Aorta (tissue), 5 donors: ENCODE measurements at regions of chr18 and their contacts with region 1.

Region 1: DNA sequence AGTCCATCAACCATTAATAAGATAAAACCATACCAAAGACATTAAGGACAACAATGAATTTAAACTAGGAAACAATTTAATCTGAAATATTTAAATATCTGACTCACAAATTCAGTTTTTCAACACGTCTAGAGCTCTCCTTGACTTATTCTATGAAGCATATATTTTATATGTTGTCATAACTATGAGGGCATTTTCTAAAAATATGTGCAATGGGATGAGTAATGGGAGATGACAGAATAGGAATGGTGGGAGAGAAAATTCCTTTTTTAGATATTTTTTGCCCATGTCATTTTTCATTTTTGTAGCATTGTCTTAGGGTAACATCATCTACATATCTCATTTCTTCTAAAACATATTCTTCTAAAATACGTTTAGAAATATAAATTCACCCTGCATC is 79.2 kb upstream of the CDH2 start:
- DNase-seq: no peak
- ATAC-seq: no peak
- H3K4me3 ChIP-seq: no peak overlapping the region
- H3K27ac ChIP-seq: no peak overlapping the region
- H3K4me1 ChIP-seq: no peaks in the 10 kb centered on the region
- H3K27me3 ChIP-seq: no peaks in the 10 kb centered on the region

Region 2: GRCh38 chr18:27695503-27695902 is 560.7 kb before region 1 on chr18:
- intact Hi-C with region 1: loop called in 1 of 2 experiments (anchors 5 kb)
- DNase-seq: no peak
- ATAC-seq: no peak
- H3K4me3 ChIP-seq: no peak overlapping the region
- H3K27ac ChIP-seq: no peak overlapping the region
- H3K4me1 ChIP-seq: no peaks in the 10 kb centered on the region
- H3K27me3 ChIP-seq: no peaks in the 10 kb centered on the region

Region 3: GRCh38 chr18:27954226-27954625 is 301.9 kb before region 1 on chr18:
- intact Hi-C with region 1: no loop called
- DNase-seq: no peak
- ATAC-seq: no peak
- H3K4me3 ChIP-seq: no peak overlapping the region
- H3K27ac ChIP-seq: no peak overlapping the region
- H3K4me1 ChIP-seq: no peaks in the 10 kb centered on the region
- H3K27me3 ChIP-seq: no peaks in the 10 kb centered on the region

Region 4: DNA sequence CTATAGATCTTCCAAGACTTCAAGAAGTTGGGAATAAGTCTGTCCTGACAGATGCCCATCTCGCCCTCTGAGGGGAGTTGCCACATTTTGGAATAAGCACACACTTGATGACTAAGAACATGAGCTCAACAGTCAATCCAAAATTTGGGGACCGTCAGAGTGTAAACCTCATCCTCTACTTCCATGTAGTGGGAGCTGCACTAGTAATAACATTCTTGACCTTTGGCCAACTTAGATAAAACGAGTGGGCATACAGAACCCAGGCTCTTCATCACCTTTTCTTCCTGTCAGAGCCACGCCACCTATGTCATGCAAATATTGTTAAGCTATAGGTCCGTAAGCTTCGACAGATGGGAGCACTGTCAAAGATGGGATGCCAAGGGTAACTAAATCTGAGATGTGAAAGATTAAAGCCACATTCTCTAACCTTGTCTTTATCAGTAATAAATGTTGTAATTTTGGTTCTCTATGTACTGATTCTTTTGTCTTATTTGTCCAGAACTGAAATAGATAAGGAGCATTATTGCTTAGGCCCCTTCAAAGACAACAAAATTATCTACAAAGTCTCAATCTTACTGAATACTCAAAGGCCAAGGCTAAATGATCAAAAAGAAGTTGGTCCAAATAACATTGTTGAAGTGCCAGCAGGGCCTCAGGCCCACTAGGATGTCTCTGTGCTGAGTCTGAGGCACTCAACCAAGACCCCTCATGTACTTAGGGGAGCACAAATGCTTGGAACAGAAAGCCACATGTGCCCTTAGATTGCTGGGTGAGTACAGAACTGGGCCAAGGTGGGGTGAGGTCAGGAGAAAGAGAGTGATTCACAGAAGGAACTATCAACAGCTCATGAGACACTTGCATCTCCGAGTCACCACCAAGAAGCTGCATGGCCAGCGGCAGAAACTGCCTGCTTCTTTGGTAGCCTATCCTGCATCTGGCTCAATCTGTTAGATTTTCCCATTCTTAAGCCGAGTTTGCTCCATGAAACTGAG is 94.3 kb before region 1 on chr18:
- intact Hi-C with region 1: no loop called
- DNase-seq: no peak
- ATAC-seq: no peak
- H3K4me3 ChIP-seq: no peak overlapping the region
- H3K27ac ChIP-seq: no peak overlapping the region
- H3K4me1 ChIP-seq: peaks cover 2 to 6% of the 10 kb centered on the region in 2 donors
- H3K27me3 ChIP-seq: no peaks in the 10 kb centered on the region